ENCODE measurements at regions of chr1 and their contacts with region 1.

Region 1: GRCh38 chr1:183139281-183139942 is 46.7 kb upstream of the LAMC2 start:
- DNase-seq: peak in 1 of 2 experiments; percentile 83
- H3K4me3 ChIP-seq: no peak overlapping the region
- H3K27ac ChIP-seq: peak overlapping the region; percentile 72
- H3K4me1 ChIP-seq: peaks cover 24% of the 10 kb centered on the region
- H3K27me3 ChIP-seq: no peaks in the 10 kb centered on the region
- CTCF ChIP-seq: no peak

Region 2: DNA sequence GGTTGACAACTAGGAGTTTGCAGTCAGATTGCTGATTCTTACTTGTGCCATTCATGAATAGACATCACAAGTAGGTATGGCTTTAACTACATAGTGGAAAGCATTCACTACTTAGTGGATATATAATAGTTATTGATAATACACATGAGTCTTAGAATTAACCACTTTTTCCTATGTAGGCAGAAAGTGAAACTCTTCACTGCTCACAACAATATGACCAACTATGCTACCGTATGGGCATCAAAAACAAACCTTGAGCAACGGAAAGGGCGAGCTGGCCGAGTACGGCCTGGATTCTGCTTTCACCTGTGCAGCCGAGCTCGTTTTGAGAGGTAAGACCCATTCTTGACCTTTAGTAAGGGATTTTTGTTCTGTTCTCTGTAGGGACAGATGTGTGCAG is 261.6 kb before region 1 on chr1:
- CTCF ChIA-PET with region 1: no interaction called
- POLR2A ChIA-PET with region 1: no interaction called
- intact Hi-C with region 1: loop called (anchors 10 kb)
- DNase-seq: no peak
- H3K4me3 ChIP-seq: no peak overlapping the region
- H3K27ac ChIP-seq: no peak overlapping the region
- H3K4me1 ChIP-seq: no peaks in the 10 kb centered on the region
- H3K27me3 ChIP-seq: no peaks in the 10 kb centered on the region
- CTCF ChIP-seq: no peak

Region 3: GRCh38 chr1:183185941-183186490 is 46.6 kb after region 1 on chr1 and contains the start of gene LAMC2:
- CTCF ChIA-PET with region 1: no interaction called
- POLR2A ChIA-PET with region 1: no interaction called
- intact Hi-C with region 1: loop called (anchors 2 kb)
- DNase-seq: peak; percentile 89 to 98
- H3K4me3 ChIP-seq: peak within 1 kb of the TSS; percentile 75
- H3K27ac ChIP-seq: peak within 1 kb of the TSS; percentile 85
- H3K4me1 ChIP-seq: peaks cover 42% of the 10 kb centered on the region
- H3K27me3 ChIP-seq: no peaks in the 10 kb centered on the region
- CTCF ChIP-seq: peak; percentile 63
- total RNA-seq, gene LAMC2: 105 and 109 TPM in 2 replicates

Measured in PC-9 (cell line).